Sigmoid colon (tissue), 7 donors: ENCODE measurements at regions of chr6 and their contacts with region 1.

Region 1: DNA sequence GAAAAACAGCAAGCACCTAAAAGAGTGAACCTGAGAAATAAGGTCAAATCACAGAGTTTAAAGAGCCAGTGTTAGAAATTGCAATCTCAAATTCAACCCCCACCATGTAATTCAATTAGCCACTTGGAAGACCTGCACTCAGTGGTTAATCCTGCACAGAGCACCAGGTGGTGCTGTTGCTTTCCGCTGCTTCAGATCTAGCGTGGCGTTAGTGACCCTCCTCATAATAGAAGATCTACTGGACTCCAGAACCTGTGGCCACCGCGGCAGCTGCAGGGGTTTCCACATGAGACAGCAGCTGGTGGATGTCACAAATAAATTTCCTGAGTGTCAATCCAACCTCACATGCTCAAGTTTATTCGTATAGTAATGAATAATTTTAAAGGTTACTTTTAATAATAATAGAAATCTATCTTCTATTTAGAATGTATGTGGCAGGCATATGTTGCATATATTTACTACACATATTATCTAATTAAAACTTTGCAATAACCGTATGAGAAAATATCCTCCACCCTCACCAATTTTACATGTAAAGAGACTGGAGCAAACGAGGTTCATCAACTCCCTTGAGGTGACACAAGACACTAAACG is 84.4 kb downstream of the SYNE1 start:
- DNase-seq: peak; percentile 75
- H3K4me3 ChIP-seq: no peak overlapping the region
- H3K27ac ChIP-seq: no peak overlapping the region
- H3K4me1 ChIP-seq: no peaks in the 10 kb centered on the region
- H3K27me3 ChIP-seq: no peaks in the 10 kb centered on the region
- CTCF ChIP-seq: peak; percentile 45 to 76 (median 56)
- EP300 ChIP-seq: no peak
- POLR2A ChIP-seq: no peak

Region 2: DNA sequence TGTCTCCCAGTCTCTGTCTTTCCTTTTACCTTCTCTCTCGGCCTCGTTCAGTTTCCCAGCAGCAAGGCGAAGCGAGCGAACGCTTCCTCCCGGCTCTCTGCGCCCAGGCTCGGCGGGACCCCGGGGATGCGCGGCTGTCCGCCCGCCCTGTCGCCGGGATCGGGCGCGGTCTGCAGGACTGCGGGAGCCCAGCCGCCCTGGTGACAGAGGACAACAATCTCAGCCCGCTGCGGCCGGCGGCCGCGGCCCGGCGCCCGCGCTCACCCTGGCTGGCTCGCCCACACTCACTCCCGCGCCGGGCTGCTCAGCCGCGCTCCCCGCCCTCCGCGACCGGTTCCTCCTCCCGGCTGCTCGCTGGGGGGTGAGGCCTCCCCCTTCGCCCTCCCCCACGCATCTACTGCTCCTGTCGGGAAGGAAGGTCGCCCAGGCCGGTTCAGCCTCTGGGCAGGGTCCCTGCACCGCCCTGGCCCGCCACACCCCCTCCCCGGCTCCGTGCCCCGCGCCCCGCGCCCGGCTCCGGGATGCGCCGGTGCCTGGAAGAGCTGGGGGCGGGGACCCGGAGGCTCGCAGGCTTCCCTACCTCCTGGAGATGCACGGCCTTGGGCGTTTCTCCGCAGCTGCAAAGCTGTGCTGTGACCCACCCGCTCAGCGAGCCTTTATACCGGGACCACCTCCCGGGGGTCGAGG is 84.0 kb after region 1 on chr6:
- intact Hi-C with region 1: loop called (anchors 2 kb)
- DNase-seq: peak; percentile 68
- H3K4me3 ChIP-seq: peak overlapping the region; percentile 40 to 77 (median 64)
- H3K27ac ChIP-seq: peak overlapping the region; percentile 21 to 80 (median 70)
- H3K4me1 ChIP-seq: peaks cover 0 to 20% (median 10%) of the 10 kb centered on the region in 4 donors
- H3K27me3 ChIP-seq: no peaks in the 10 kb centered on the region
- CTCF ChIP-seq: no peak
- EP300 ChIP-seq: no peak
- POLR2A ChIP-seq: no peak

Region 3: DNA sequence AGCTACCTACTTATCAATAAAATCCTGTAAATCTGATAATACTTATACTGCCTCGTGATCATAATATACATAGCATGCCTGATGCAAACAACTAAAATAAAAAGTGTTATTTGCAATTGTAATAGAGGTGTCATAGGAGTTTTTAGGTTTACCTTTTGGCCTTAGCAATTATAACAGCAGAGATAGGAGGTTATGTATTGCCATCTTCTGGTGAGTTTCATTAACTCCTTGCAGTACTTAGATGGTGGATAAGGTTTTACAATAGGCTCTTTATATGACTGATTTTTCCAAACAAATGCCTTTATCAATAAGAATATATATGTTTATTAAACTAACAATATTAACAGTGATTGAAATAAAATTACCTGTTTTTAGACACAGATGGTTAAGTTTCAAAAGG is 117.2 kb after region 1 on chr6:
- intact Hi-C with region 1: loop called (anchors 2 kb)
- DNase-seq: no peak
- H3K4me3 ChIP-seq: no peak overlapping the region
- H3K27ac ChIP-seq: no peak overlapping the region
- H3K4me1 ChIP-seq: no peaks in the 10 kb centered on the region
- H3K27me3 ChIP-seq: no peaks in the 10 kb centered on the region
- CTCF ChIP-seq: peak in 3 of 4 experiments; percentile 11 to 23 (median 19)
- EP300 ChIP-seq: no peak
- POLR2A ChIP-seq: no peak